Right lobe of liver (tissue), 6 donors: ENCODE measurements at regions of chr3 and their contacts with region 1.

Region 1: GRCh38 chr3:36729204-36730056 is 34.9 kb downstream of the DCLK3 start:
- DNase-seq: no peak
- ATAC-seq: peak; percentile 69 to 80 (median 72)
- H3K4me3 ChIP-seq: no peak overlapping the region
- H3K27ac ChIP-seq: no peak overlapping the region
- H3K4me1 ChIP-seq: no peaks in the 10 kb centered on the region
- H3K27me3 ChIP-seq: no peaks in the 10 kb centered on the region
- CTCF ChIP-seq: peak; percentile 58 to 78 (median 71)
- POLR2A ChIP-seq: no peak

Region 2: DNA sequence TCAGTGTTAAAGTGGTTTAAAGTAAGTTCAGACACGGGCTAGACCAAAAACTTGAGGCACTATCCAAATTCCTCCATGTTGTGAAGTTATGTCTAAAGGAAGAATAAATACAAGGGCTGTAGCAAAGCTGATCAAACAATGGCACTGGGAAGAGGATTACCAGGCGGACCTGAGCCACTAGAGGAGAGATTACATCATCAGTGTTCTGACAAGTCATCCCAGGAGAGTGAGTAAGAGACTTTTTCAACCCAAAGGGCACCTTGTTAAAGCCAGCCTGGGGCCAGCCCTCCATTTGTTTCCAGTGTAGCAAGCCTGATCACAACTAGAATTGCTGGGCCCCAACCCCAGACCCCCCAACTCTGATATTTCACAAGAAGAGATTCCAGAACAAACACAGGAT is 132.0 kb before region 1 on chr3:
- intact Hi-C with region 1: no loop called
- DNase-seq: no peak
- ATAC-seq: no peak
- H3K4me3 ChIP-seq: no peak overlapping the region
- H3K27ac ChIP-seq: no peak overlapping the region
- H3K4me1 ChIP-seq: no peaks in the 10 kb centered on the region
- H3K27me3 ChIP-seq: no peaks in the 10 kb centered on the region
- CTCF ChIP-seq: no peak
- POLR2A ChIP-seq: no peak

Region 3: DNA sequence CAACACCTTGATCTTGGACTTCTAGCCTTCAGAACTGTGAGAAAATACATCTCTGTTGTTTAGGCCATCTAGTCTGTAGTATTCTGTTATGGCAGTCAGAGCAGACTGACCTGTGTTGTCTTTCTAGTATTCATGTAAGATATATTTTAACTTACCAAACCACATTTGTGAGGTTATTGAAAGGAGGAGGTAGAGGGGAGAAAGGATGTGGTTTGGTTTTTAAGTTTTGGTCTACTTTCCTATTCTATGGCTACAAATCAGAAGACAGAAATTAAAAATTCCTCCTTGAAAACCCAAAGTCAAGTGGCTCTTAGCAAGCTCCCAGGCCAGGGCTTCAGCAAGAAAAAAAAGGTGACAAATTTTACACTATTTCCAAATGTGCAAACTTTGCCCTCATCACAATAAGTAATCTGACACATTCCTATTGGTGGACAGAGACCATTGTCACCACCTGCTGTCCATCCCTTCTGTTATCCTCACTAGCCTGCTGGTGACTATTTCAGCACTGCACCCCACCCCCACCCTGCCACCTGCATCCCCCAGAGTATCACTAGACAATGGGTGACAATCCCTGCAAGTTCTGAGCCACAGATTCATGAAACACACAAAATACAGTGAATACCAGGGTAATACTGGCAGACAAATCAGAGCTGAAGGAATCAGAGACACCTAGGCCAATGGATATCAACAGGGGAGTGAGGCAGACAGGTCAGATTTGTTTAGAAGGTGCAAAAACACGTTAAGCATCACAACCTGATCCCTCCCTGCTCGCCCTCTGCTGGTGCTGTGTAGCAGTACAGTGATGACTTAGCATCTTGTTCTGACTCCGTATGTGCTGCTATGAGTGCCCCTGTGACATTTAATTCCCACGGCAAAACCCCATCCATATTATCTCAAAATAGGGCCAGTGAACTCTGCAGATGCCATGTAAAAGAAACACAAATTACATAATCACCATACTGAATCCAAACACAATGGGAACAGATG is 113.9 kb after region 1 on chr3:
- intact Hi-C with region 1: loop called in 1 of 2 experiments (anchors 10 kb)
- DNase-seq: no peak
- ATAC-seq: peak; percentile 50 to 68 (median 54)
- H3K4me3 ChIP-seq: no peak overlapping the region
- H3K27ac ChIP-seq: no peak overlapping the region
- H3K4me1 ChIP-seq: no peaks in the 10 kb centered on the region
- H3K27me3 ChIP-seq: no peaks in the 10 kb centered on the region
- CTCF ChIP-seq: peak; percentile 26 to 48 (median 31)
- POLR2A ChIP-seq: no peak

Region 4: DNA sequence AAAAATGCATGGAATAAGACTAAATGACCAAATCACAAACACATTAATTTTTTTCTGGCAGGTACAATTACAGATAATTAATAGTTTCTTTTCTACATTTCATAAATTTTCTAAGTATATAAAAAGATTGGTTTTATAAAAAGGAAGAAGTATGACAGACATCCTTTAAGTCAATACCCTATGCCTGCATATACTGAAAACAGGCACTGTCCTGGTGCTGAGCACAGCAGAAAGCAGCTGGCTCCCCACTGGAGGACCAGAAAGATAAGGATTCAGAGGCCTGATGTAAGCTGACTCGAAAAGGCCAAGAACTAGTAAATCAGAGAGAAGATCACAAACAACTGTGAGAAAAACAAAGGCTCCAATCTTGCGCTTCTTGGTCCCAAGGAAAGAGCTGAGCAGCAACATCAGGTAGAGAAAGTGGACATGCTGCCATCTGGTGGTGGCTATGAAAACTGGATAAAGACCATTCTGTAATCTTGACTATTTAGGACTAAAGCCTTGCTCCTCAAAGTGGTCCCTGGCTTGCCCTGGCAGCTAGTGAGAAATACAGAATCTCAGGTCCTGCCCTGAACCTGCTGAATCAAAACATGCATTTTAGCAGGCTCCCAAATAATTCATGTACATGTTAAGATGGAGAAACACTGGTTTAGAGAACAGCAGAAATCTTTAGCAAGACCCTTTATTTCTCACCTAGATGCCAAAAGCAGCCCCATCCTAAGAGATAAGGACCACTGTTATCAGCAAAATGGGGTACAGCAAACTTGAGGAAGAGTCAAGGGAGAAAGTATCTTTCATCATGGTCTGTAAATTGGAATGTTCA is 139.4 kb after region 1 on chr3:
- intact Hi-C with region 1: loop called in 1 of 2 experiments (anchors 10 kb)
- DNase-seq: no peak
- ATAC-seq: peak; percentile 85 to 91 (median 89)
- H3K4me3 ChIP-seq: no peak overlapping the region
- H3K27ac ChIP-seq: no peak overlapping the region
- H3K4me1 ChIP-seq: no peaks in the 10 kb centered on the region
- H3K27me3 ChIP-seq: no peaks in the 10 kb centered on the region
- CTCF ChIP-seq: peak; percentile 62 to 86 (median 82)
- POLR2A ChIP-seq: no peak